A549 (cell line): ENCODE measurements at regions of chr12 and their contacts with region 1.

Region 1: DNA sequence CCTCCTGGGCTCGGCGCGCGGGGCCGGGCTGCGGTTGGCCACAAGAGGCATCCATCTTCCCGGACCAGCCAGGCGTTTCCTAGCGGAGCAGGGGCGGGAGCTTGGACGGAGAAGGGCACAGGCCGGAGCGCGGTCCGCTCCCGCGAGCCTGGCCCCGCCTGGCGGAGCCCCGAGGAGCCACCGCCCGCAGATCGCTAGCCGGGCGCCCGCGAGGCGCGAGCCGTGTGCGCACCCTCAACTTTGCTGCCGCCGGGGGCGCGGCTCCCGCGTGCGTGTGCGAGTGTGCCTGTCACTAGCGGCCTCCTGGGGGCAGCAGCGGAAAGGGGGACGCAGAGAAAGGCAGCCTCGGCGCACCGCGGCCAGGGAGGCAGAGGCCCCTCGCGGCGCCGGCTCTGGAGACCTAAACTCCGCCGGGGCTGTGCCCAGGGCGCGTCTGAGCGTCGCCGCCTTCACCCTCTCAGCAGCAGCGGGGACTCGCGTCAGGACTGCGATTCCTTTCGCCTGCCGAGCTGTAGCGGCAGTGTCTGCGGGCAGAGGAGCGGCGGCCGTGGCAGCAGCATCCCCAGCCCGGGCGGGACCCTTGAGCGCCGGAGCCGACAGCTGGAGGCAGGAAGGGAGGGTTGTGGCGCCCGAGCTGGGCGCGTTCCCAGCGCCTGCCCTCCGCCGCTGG is 644 bp upstream of the SRGAP1 start:
- DNase-seq: peak; percentile 92 to 97
- ATAC-seq: peak; percentile 90 to 93
- H3K4me3 ChIP-seq: peak overlapping the region; percentile 88
- H3K27ac ChIP-seq: peak overlapping the region; percentile 97 to 98
- H3K4me1 ChIP-seq: peaks cover 27% of the 10 kb centered on the region
- CTCF ChIP-seq: peak; percentile 98
- EP300 ChIP-seq: 0 out of 5 replicates have a peak, but pooled peaks of 1 of the 2 experiments have one; percentile 38
- POLR2A ChIP-seq: no peak
- RAD21 ChIP-seq: peak; percentile 97 to 99

Region 2: GRCh38 chr12:63764481-63764880 is 79.4 kb before region 1 on chr12:
- CTCF ChIA-PET with region 1: no interaction called
- POLR2A ChIA-PET with region 1: no interaction called
- DNase-seq: no peak
- ATAC-seq: 0 out of 6 replicates have a peak, but pooled peaks of 1 of the 2 experiments have one; percentile 47
- H3K4me3 ChIP-seq: no peak overlapping the region
- H3K27ac ChIP-seq: no peak overlapping the region
- H3K4me1 ChIP-seq: no peaks in the 10 kb centered on the region
- CTCF ChIP-seq: no peak
- EP300 ChIP-seq: no peak
- POLR2A ChIP-seq: no peak
- RAD21 ChIP-seq: no peak

Region 3: GRCh38 chr12:63876980-63877379 is 33.1 kb after region 1 on chr12:
- CTCF ChIA-PET with region 1: interaction called, 12 read pairs
- POLR2A ChIA-PET with region 1: no interaction called
- DNase-seq: peak in 1 of 2 experiments; percentile 26
- ATAC-seq: no peak
- H3K4me3 ChIP-seq: no peak overlapping the region
- H3K27ac ChIP-seq: peak overlapping the region; percentile 35 to 56; a peak in 3 of 6 replicates
- H3K4me1 ChIP-seq: peaks cover 41% of the 10 kb centered on the region
- CTCF ChIP-seq: no peak
- EP300 ChIP-seq: no peak
- POLR2A ChIP-seq: no peak
- RAD21 ChIP-seq: no peak

Region 4: GRCh38 chr12:63928305-63928704 is 84.4 kb after region 1 on chr12:
- CTCF ChIA-PET with region 1: interaction called, 15 read pairs
- POLR2A ChIA-PET with region 1: no interaction called
- DNase-seq: no peak
- ATAC-seq: no peak
- H3K4me3 ChIP-seq: no peak overlapping the region
- H3K27ac ChIP-seq: 0 out of 6 replicates have a peak overlapping the region, but pooled peaks of 1 of the 2 experiments have one; percentile 1
- H3K4me1 ChIP-seq: peaks cover 12% of the 10 kb centered on the region; the same call in 1 of the 3 replicates
- CTCF ChIP-seq: no peak
- EP300 ChIP-seq: no peak
- POLR2A ChIP-seq: no peak
- RAD21 ChIP-seq: no peak

Region 5: DNA sequence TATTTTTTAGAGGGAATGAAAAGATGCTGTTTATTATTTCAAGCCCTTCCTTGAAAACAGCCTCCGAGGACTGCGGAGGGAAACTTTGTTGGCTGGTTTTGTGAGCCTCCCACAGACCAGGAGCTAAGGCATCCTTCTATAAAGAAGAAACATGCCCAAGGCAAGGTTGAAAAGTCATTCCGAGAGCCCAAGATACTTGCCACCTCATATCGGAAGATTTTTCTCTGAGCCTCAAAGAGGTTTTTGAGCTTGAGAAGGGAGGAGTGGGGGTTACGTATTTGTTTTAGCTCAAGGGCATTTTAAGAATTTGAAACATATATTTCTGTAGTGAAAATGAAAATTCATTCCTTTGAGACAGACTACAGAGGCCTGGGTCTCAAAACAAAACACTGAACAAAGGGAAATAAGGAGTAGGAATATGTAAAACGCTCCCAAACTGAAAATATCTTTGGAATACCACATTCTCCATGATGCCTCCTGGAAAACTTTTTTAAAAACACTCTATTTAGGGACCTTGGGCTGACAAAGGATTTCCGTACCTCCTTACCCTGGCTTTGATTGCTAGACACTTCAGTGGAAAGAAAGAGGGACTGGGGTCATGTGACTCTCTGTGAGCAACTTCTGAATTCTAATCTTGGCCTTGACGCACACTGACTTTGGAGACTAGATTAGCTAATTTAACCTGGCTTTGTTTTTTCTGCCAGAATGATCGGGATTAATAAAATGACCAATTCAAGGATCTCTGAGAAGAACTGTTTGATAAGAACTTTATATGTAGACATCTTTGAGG is 181.5 kb after region 1 on chr12:
- CTCF ChIA-PET with region 1: interaction called, 12 read pairs
- POLR2A ChIA-PET with region 1: no interaction called
- DNase-seq: no peak
- ATAC-seq: no peak
- H3K4me3 ChIP-seq: no peak overlapping the region
- H3K27ac ChIP-seq: no peak overlapping the region
- H3K4me1 ChIP-seq: no peaks in the 10 kb centered on the region
- CTCF ChIP-seq: no peak
- EP300 ChIP-seq: no peak
- POLR2A ChIP-seq: no peak
- RAD21 ChIP-seq: no peak

Region 6: DNA sequence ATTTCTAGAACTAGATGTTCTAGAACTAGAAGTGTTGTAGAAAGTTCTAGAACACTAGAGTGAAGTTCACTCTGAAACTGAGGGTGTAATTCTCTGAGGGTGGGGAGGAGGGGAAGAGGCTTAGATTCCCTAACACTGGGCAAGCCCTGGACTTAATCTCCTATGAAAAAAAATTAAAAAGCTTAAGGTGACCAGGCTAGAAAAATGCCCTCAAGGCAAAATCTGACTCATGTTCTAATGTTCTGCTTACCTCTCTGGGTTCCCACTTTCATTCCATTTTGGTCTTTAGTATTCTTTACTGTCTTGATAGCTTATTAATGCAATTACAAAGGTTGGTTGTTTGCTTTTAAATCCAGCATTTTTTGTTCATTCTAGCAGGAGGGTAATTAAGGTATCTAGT is 276.7 kb after region 1 on chr12:
- CTCF ChIA-PET with region 1: interaction called, 12 read pairs
- POLR2A ChIA-PET with region 1: no interaction called
- DNase-seq: no peak
- ATAC-seq: no peak
- H3K4me3 ChIP-seq: no peak overlapping the region
- H3K27ac ChIP-seq: no peak overlapping the region
- H3K4me1 ChIP-seq: peaks cover 7% of the 10 kb centered on the region; the same call in 2 of the 3 replicates
- CTCF ChIP-seq: no peak
- EP300 ChIP-seq: no peak
- POLR2A ChIP-seq: no peak
- RAD21 ChIP-seq: no peak

Region 7: GRCh38 chr12:64222009-64222765 is 378.3 kb after region 1 on chr12 and contains the start of gene KICS2:
- CTCF ChIA-PET with region 1: interaction called, 5 read pairs
- POLR2A ChIA-PET with region 1: interaction called, 21 read pairs
- DNase-seq: peak; percentile 90 to 97
- ATAC-seq: peak; percentile 95 to 96
- H3K4me3 ChIP-seq: peak within 1 kb of the TSS; percentile 71
- H3K27ac ChIP-seq: peak within 1 kb of the TSS; percentile 87 to 93
- H3K4me1 ChIP-seq: peaks cover 21% of the 10 kb centered on the region
- CTCF ChIP-seq: no peak
- EP300 ChIP-seq: no peak
- POLR2A ChIP-seq: peak; percentile 90
- RAD21 ChIP-seq: peak in 1 of 2 experiments; percentile 13; a peak in 1 of 5 replicates
- polyA plus RNA-seq, gene KICS2: 21.4 and 22.5 TPM in 2 replicates